Mammary epithelial cell (primary cell): ENCODE measurements at regions of chr4 and their contacts with region 1.

Region 1: DNA sequence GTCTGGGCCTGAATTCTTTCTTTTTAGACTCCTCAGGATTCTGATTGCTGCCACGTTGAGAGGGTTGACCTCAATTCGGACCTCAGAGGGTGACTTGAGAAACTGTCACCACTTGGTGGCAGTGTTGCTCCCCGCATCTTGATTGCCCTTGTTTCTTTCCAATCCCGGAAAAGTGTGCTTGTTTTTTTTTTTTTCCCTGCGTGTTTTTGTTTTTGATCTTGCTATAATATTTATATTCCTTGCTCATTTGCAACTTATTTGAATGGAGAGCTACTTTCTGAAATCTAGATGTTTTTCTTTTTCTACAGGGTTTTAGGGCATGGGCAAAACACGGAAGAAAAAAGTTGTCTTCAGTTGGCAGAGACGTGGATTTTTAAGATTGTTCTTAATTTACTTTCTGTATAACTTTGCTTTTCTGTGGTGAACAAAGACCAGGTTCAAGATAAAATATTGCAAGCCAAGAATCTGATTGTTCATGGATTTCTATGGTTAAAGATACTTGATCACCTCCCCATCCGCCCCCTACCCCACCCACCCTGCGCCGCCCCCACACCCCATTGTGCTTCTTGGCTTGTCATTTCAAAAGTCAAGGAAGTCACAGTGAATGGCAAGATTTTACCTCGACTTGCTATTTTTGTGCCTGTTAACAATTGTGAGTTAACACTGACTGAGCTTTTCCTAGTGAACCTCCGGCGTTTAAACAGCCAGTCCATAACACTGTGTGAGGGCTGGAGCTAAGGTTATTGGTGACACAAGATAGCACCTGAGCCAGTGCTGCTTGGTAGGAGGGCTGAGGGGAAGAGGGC is 102.1 kb downstream of the PTTG2 start:
- DNase-seq: peak; percentile 50
- H3K4me3 ChIP-seq: peak overlapping the region; percentile 12 to 26 (median 18)
- H3K27ac ChIP-seq: peak overlapping the region; percentile 47
- H3K4me1 ChIP-seq: no peaks in the 10 kb centered on the region
- H3K27me3 ChIP-seq: no peaks in the 10 kb centered on the region
- CTCF ChIP-seq: peak; percentile 67 to 82

Region 2: GRCh38 chr4:37946503-37947179 is 115.7 kb before region 1 on chr4:
- CTCF ChIA-PET with region 1: no interaction called
- dilution Hi-C with region 1: no loop called
- in situ Hi-C with region 1: no loop called
- intact Hi-C with region 1: no loop called
- DNase-seq: no peak
- H3K4me3 ChIP-seq: no peak overlapping the region
- H3K27ac ChIP-seq: no peak overlapping the region
- H3K4me1 ChIP-seq: no peaks in the 10 kb centered on the region
- H3K27me3 ChIP-seq: no peaks in the 10 kb centered on the region
- CTCF ChIP-seq: no peak

Region 3: DNA sequence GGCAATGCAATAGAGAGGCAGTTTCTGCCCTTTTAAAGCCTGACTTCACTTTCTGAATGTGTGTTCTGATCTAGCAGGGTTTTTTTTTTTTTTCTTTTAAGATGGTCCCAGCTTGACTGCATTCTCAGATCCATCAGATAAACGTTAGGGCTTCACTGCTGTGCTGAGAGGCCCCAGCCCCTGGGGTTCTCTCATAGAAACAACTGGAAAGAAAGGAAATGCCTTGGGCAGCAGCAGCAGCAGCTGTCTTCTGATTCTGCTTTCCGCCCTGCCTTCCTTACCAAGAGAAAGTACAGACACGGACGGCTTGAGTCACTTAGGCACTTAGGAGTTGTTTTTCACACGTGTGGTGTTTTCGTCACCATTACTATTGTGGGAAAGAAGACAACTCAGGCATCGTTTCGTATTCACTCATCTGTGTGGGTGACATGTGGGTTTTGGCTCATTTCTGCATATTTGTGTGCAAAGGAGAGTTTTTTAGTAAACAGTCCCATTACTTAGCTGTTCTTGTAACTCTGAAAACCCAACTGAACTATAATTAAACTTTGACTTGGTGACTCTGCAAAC is 69.9 kb after region 1 on chr4:
- CTCF ChIA-PET with region 1: no interaction called
- dilution Hi-C with region 1: no loop called
- in situ Hi-C with region 1: no loop called
- intact Hi-C with region 1: loop called (anchors 5 kb)
- DNase-seq: peak; percentile 99
- H3K4me3 ChIP-seq: no peak overlapping the region
- H3K27ac ChIP-seq: peak overlapping the region; percentile 99
- H3K4me1 ChIP-seq: peaks cover 35% of the 10 kb centered on the region
- H3K27me3 ChIP-seq: no peaks in the 10 kb centered on the region
- CTCF ChIP-seq: no peak

Region 4: GRCh38 chr4:38179690-38180377 is 117.5 kb after region 1 on chr4:
- CTCF ChIA-PET with region 1: no interaction called
- dilution Hi-C with region 1: no loop called
- in situ Hi-C with region 1: loop called (anchors 5 to 10 kb)
- intact Hi-C with region 1: loop called (anchors 1 kb)
- DNase-seq: peak; percentile 74
- H3K4me3 ChIP-seq: no peak overlapping the region
- H3K27ac ChIP-seq: peak overlapping the region; percentile 37
- H3K4me1 ChIP-seq: peaks cover 26% of the 10 kb centered on the region
- H3K27me3 ChIP-seq: no peaks in the 10 kb centered on the region
- CTCF ChIP-seq: peak; percentile 91 to 92

Region 5: GRCh38 chr4:38562751-38563198 is 500.5 kb after region 1 on chr4:
- CTCF ChIA-PET with region 1: no interaction called
- dilution Hi-C with region 1: no loop called
- in situ Hi-C with region 1: no loop called
- intact Hi-C with region 1: loop called (anchors 10 kb)
- DNase-seq: peak; percentile 39
- H3K4me3 ChIP-seq: no peak overlapping the region
- H3K27ac ChIP-seq: no peak overlapping the region
- H3K4me1 ChIP-seq: peaks cover 38% of the 10 kb centered on the region
- H3K27me3 ChIP-seq: no peaks in the 10 kb centered on the region
- CTCF ChIP-seq: no peak

Region 6: GRCh38 chr4:38730830-38731646 is 668.7 kb after region 1 on chr4:
- CTCF ChIA-PET with region 1: no interaction called
- dilution Hi-C with region 1: no loop called
- in situ Hi-C with region 1: loop called (anchors 10 kb)
- intact Hi-C with region 1: loop called (anchors 1 kb)
- DNase-seq: peak; percentile 86
- H3K4me3 ChIP-seq: no peak overlapping the region
- H3K27ac ChIP-seq: no peak overlapping the region
- H3K4me1 ChIP-seq: peaks cover 12% of the 10 kb centered on the region
- H3K27me3 ChIP-seq: no peaks in the 10 kb centered on the region
- CTCF ChIP-seq: peak; percentile 94 to 95